Tibial artery (tissue), 4 donors: ENCODE measurements at regions of chr21 and their contacts with region 1.

Region 1: GRCh38 chr21:38355992-38356797 is 99.4 kb downstream of the KCNJ15 start:
- DNase-seq: peak; percentile 70 to 89
- H3K4me3 ChIP-seq: no peak overlapping the region
- H3K27ac ChIP-seq: no peak overlapping the region
- H3K4me1 ChIP-seq: peaks cover 0 to 29% (median 17%) of the 10 kb centered on the region in 4 donors
- H3K27me3 ChIP-seq: no peaks in the 10 kb centered on the region
- CTCF ChIP-seq: peak; percentile 97 to 98

Region 2: DNA sequence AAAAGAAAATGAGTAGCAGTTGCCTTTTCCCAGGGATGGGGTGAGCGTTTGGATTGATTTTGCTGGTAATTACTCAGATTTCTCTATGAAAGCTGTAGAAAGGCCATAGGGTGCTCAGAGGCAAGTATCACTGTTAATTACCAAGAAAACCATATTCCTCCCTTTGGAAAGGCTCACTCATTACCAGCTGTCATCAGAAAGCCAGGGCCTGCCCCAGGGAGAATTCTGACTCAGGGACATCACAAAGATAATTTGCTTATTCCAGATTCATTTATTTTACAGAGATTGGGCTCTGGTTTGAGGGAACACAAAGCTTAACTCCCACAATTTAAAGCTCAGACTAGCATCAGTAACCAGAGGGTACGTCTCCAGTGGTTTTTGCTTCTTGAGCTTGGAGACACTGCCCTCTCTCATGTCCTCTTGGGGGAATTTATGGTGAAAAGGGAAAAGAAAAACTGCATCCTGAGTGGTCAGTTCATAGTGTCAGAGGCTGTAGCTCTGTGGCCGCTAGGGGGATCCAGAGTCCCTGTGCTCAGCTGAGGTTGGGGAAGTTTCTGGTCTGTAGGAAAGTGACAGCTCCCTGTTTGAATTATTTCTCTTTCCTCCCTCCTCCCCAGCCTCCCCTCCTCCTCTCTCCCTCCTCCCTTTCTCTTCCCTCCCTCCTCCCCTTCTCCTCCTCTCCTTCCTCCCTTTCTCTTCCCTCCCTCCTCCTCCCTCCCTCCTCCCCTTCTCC is 644.2 kb before region 1 on chr21:
- intact Hi-C with region 1: loop called (anchors 5 kb)
- DNase-seq: peak; percentile 59 to 80
- H3K4me3 ChIP-seq: no peak overlapping the region
- H3K27ac ChIP-seq: peak overlapping the region; percentile 71 to 73
- H3K4me1 ChIP-seq: peaks cover 0 to 37% (median 12%) of the 10 kb centered on the region in 4 donors
- H3K27me3 ChIP-seq: no peaks in the 10 kb centered on the region
- CTCF ChIP-seq: peak; percentile 78 to 89

Region 3: DNA sequence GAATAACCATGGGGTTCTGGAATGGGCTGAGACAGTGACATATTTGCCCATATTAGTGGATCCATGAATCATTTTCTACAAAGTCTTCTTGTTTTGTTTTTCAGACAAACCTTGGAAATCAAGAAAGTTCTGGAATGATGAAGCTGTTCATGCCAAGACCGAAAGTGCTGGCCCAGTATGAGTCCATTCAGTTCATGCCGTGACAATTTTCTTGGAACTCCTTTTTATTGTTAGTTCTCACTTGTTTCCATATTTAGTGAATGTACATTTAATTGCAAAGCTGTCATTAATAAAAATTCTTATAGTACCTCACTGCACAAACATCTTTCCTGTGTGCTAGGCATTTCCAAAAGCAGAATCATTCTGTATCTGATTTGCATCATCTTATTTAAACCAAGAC is 200.0 kb before region 1 on chr21:
- intact Hi-C with region 1: loop called (anchors 2 kb)
- DNase-seq: no peak
- H3K4me3 ChIP-seq: no peak overlapping the region
- H3K27ac ChIP-seq: no peak overlapping the region
- H3K4me1 ChIP-seq: peaks cover 0 to 5% (median 0%) of the 10 kb centered on the region in 4 donors
- H3K27me3 ChIP-seq: peaks cover 0 to 4% of the 10 kb centered on the region in 2 donors
- CTCF ChIP-seq: no peak

Region 4: DNA sequence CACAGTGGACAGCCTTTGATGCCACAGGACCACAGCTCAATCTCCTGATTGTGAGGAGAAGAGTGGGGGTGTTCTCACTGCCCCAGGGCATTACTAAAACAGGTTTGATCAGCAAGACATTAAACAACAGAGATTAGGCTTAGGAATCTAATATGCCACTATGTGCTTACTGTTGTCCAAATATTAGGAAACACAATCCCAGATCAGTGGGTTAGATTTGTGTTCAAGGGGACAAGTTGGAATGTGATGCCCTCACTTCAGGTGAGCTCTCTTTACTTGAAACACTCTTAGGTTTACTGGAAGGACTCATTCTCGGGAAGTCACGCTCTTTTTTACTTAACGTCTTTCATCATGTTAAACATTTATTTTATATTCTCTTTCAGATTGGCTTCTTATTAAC is 138.9 kb before region 1 on chr21:
- intact Hi-C with region 1: loop called (anchors 2 kb)
- DNase-seq: no peak
- H3K4me3 ChIP-seq: no peak overlapping the region
- H3K27ac ChIP-seq: no peak overlapping the region
- H3K4me1 ChIP-seq: no peaks in the 10 kb centered on the region
- H3K27me3 ChIP-seq: no peaks in the 10 kb centered on the region
- CTCF ChIP-seq: no peak